CD4-positive, alpha-beta T cell (primary cell): ENCODE measurements at regions of chr7 and their contacts with region 1.

Region 1: GRCh38 chr7:107743567-107744344 is at the start of gene CBLL1:
- DNase-seq: peak; percentile 94 to 98 (median 97)
- ATAC-seq: peak; percentile 90
- H3K4me3 ChIP-seq: peak within 1 kb of the TSS; percentile 87
- H3K4me3 Mint-ChIP-seq: peak within 1 kb of the TSS; percentile 93
- H3K27ac ChIP-seq: peak within 1 kb of the TSS; percentile 99
- H3K27ac Mint-ChIP-seq: peak within 1 kb of the TSS; percentile 99
- H3K4me1 ChIP-seq: peaks cover 15% of the 10 kb centered on the region
- H3K4me1 Mint-ChIP-seq: peaks cover 55% of the 10 kb centered on the region
- H3K27me3 ChIP-seq: no peaks in the 10 kb centered on the region
- H3K27me3 Mint-ChIP-seq: no peaks in the 10 kb centered on the region
- CTCF ChIP-seq: peak; percentile 68
- total RNA-seq, gene CBLL1: 77.8 to 80.2 TPM

Region 2: DNA sequence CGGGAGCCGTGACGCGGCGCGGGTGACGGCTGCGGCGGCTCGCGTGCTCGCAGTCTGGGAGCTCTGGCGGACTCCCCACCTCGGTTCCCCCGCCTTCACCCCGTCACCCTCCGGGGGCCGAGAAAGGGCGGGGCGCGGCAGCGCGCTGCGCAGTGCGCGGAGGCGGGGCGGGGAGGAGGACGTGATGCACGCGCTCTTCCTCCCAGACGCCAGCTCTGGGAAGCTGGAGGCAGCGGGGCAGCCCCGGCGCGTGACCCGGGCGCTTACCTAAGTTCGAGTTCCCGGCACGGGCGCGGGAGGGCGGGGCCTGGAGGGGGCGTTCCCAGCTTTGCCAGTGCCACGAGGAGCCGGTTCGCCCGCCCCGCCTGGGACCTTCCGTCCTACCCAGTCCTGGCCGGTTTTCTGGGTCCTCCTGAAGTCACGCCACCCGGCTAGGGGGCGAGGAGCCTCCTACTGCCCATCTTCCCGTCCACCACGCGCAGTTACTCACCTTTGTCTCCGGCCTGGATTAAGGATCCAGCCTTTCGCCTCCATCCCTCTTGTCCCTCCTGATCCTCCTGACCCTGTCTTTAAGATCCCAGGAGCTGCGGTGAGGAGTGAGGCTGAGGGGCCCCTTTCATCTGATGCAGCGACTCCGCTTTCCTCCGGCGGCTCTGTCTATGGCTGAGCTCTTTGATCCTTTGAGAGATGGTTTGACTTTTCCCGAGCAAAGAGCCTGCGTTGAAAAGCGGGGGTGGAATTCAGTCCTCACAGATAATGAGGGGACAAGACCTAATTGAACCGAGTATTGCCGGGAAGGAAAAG is 1458.5 kb before region 1 on chr7:
- CTCF ChIA-PET with region 1: interaction called, 4 read pairs
- POLR2A ChIA-PET with region 1: interaction called, 8 read pairs
- intact Hi-C with region 1: loop called in 1 of 2 experiments (anchors 10 kb)
- DNase-seq: peak; percentile 92 to 100 (median 97)
- ATAC-seq: peak; percentile 88
- H3K4me3 ChIP-seq: peak overlapping the region; percentile 75
- H3K4me3 Mint-ChIP-seq: peak overlapping the region; percentile 99
- H3K27ac ChIP-seq: peak overlapping the region; percentile 84 to 91
- H3K27ac Mint-ChIP-seq: peak overlapping the region; percentile 94
- H3K4me1 ChIP-seq: peaks cover 9% of the 10 kb centered on the region
- H3K4me1 Mint-ChIP-seq: peaks cover 37% of the 10 kb centered on the region
- H3K27me3 ChIP-seq: no peaks in the 10 kb centered on the region
- H3K27me3 Mint-ChIP-seq: no peaks in the 10 kb centered on the region
- CTCF ChIP-seq: no peak

Region 3: GRCh38 chr7:107044347-107045194 is 699.2 kb before region 1 on chr7 and contains the start of gene PRKAR2B:
- CTCF ChIA-PET with region 1: no interaction called
- POLR2A ChIA-PET with region 1: no interaction called
- intact Hi-C with region 1: loop called in 1 of 2 experiments (anchors 10 kb)
- DNase-seq: peak; percentile 56 to 93 (median 71)
- ATAC-seq: peak; percentile 94
- H3K4me3 ChIP-seq: peak within 1 kb of the TSS; percentile 60
- H3K4me3 Mint-ChIP-seq: peak within 1 kb of the TSS; percentile 94
- H3K27ac ChIP-seq: no peak within 1 kb of the TSS
- H3K27ac Mint-ChIP-seq: peak within 1 kb of the TSS; percentile 39
- H3K4me1 ChIP-seq: peaks cover 10% of the 10 kb centered on the region
- H3K4me1 Mint-ChIP-seq: peaks cover 13% of the 10 kb centered on the region
- H3K27me3 ChIP-seq: peaks cover 12 to 30% of the 10 kb centered on the region in 2 experiments
- H3K27me3 Mint-ChIP-seq: peaks cover 43% of the 10 kb centered on the region
- CTCF ChIP-seq: no peak
- total RNA-seq, gene PRKAR2B: 0.41 to 0.42 TPM

Region 4: DNA sequence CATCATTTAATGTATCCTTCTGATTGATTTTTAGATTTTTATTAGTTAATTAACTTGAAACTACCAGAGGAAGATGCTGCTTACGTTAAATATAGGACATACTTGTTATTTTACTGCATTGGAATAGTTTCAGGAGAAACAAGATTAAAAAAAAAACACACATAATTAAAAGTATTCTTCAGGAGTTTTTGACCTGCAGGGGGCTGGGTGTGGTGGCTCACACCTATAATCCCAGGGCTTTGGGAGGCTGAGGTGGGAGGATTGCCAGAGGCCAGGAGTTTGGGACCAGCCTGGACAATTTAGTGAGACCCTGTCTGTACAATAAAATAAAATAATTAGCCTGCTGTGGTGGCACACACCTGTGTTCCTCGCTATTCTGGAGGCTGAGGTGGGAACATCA is 10.9 kb after region 1 on chr7:
- CTCF ChIA-PET with region 1: interaction called, 5 read pairs
- POLR2A ChIA-PET with region 1: interaction called, 14 read pairs
- intact Hi-C with region 1: no loop called
- DNase-seq: peak in 1 of 14 experiments; percentile 13
- ATAC-seq: no peak
- H3K4me3 ChIP-seq: no peak overlapping the region
- H3K4me3 Mint-ChIP-seq: no peak overlapping the region
- H3K27ac ChIP-seq: no peak overlapping the region
- H3K27ac Mint-ChIP-seq: no peak overlapping the region
- H3K4me1 ChIP-seq: peaks cover 3% of the 10 kb centered on the region
- H3K4me1 Mint-ChIP-seq: peaks cover 40% of the 10 kb centered on the region
- H3K27me3 ChIP-seq: no peaks in the 10 kb centered on the region
- H3K27me3 Mint-ChIP-seq: no peaks in the 10 kb centered on the region
- CTCF ChIP-seq: no peak

Region 5: GRCh38 chr7:107879400-107880035 is 135.8 kb after region 1 on chr7:
- CTCF ChIA-PET with region 1: interaction called, 30 read pairs
- POLR2A ChIA-PET with region 1: interaction called, 152 read pairs
- intact Hi-C with region 1: loop called in 1 of 2 experiments (anchors 1 kb)
- DNase-seq: peak in 6 of 14 experiments; percentile 9 to 79 (median 58)
- ATAC-seq: peak; percentile 74
- H3K4me3 ChIP-seq: no peak overlapping the region
- H3K4me3 Mint-ChIP-seq: no peak overlapping the region
- H3K27ac ChIP-seq: no peak overlapping the region
- H3K27ac Mint-ChIP-seq: no peak overlapping the region
- H3K4me1 ChIP-seq: peaks cover 4% of the 10 kb centered on the region
- H3K4me1 Mint-ChIP-seq: peaks cover 36% of the 10 kb centered on the region
- H3K27me3 ChIP-seq: peaks cover 0 to 5% of the 10 kb centered on the region in 2 experiments
- H3K27me3 Mint-ChIP-seq: peaks cover 18% of the 10 kb centered on the region
- CTCF ChIP-seq: peak; percentile 72

Region 6: GRCh38 chr7:108569381-108570145 is 825.8 kb after region 1 on chr7 and contains the starts of genes DNAJB9 and THAP5:
- CTCF ChIA-PET with region 1: no interaction called
- POLR2A ChIA-PET with region 1: interaction called, 13 read pairs
- intact Hi-C with region 1: no loop called
- DNase-seq: peak; percentile 97 to 100 (median 99)
- ATAC-seq: peak; percentile 82
- H3K4me3 ChIP-seq: peak within 1 kb of the TSS; percentile 78
- H3K4me3 Mint-ChIP-seq: peak within 1 kb of the TSS; percentile 93
- H3K27ac ChIP-seq: peak within 1 kb of the TSS; percentile 98 to 99
- H3K27ac Mint-ChIP-seq: peak within 1 kb of the TSS; percentile 99
- H3K4me1 ChIP-seq: peaks cover 16% of the 10 kb centered on the region
- H3K4me1 Mint-ChIP-seq: peaks cover 81% of the 10 kb centered on the region
- H3K27me3 ChIP-seq: no peaks in the 10 kb centered on the region
- H3K27me3 Mint-ChIP-seq: no peaks in the 10 kb centered on the region
- CTCF ChIP-seq: no peak
- total RNA-seq, gene DNAJB9: 66.5 to 72.1 TPM
- total RNA-seq, gene THAP5: 11.7 to 12.6 TPM